GM12878 (cell line): ENCODE measurements at regions of chr3 and their contacts with region 1.

Region 1: DNA sequence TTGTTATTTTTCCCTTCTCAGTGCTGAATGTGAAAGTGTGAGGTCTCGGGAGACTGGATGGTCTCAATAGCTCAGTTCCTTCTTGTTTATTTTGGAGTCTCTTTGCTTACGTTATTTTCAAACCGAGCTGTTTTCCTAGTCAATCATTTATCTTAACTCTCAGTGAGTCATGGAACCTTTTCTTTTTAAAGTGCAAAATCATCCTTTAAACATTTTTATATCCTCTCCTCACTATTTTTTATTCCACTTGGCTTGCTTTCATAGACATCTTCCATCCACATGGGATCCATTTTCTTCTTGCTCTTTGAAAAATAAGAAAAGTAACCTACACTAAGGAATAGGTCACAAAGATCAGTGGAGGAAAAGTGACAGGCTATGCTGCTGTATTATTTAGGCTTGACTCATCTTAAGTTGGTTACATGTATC is 497.8 kb downstream of the NAALADL2 start:
- DNase-seq: no peak
- ATAC-seq: peak; percentile 64
- H3K4me3 ChIP-seq: no peak overlapping the region
- H3K27ac ChIP-seq: no peak overlapping the region
- H3K4me1 ChIP-seq: no peaks in the 10 kb centered on the region
- H3K27me3 ChIP-seq: no peaks in the 10 kb centered on the region
- CTCF ChIP-seq: no peak
- EP300 ChIP-seq: peak; percentile 41 to 79; a peak in 3 of 4 replicates
- POLR2A ChIP-seq: no peak
- RAD21 ChIP-seq: no peak

Region 2: GRCh38 chr3:174700736-174701135 is 656.2 kb before region 1 on chr3:
- CTCF ChIA-PET with region 1: no interaction called
- POLR2A ChIA-PET with region 1: no interaction called
- RAD21 ChIA-PET with region 1: no interaction called
- SMC1A ChIA-PET with region 1: no interaction called
- in situ Hi-C with region 1: no loop called
- intact Hi-C with region 1: no loop called
- DNase-seq: no peak
- ATAC-seq: no peak
- H3K4me3 ChIP-seq: no peak overlapping the region
- H3K27ac ChIP-seq: no peak overlapping the region
- H3K4me1 ChIP-seq: no peaks in the 10 kb centered on the region
- H3K27me3 ChIP-seq: no peaks in the 10 kb centered on the region
- CTCF ChIP-seq: no peak
- EP300 ChIP-seq: no peak
- POLR2A ChIP-seq: no peak
- RAD21 ChIP-seq: no peak

Region 3: GRCh38 chr3:175287361-175287963 is 69.5 kb before region 1 on chr3:
- CTCF ChIA-PET with region 1: interaction called, 3 read pairs
- POLR2A ChIA-PET with region 1: interaction called, 3 read pairs
- RAD21 ChIA-PET with region 1: interaction called, 23 read pairs
- SMC1A ChIA-PET with region 1: interaction called, 15 read pairs
- in situ Hi-C with region 1: no loop called
- intact Hi-C with region 1: no loop called
- DNase-seq: peak; percentile 54
- ATAC-seq: peak; percentile 100
- H3K4me3 ChIP-seq: no peak overlapping the region
- H3K27ac ChIP-seq: no peak overlapping the region
- H3K4me1 ChIP-seq: no peaks in the 10 kb centered on the region
- H3K27me3 ChIP-seq: no peaks in the 10 kb centered on the region
- CTCF ChIP-seq: no peak
- EP300 ChIP-seq: peak in 1 of 2 experiments; percentile 32; a peak in 1 of 4 replicates
- POLR2A ChIP-seq: no peak
- RAD21 ChIP-seq: no peak

Region 4: DNA sequence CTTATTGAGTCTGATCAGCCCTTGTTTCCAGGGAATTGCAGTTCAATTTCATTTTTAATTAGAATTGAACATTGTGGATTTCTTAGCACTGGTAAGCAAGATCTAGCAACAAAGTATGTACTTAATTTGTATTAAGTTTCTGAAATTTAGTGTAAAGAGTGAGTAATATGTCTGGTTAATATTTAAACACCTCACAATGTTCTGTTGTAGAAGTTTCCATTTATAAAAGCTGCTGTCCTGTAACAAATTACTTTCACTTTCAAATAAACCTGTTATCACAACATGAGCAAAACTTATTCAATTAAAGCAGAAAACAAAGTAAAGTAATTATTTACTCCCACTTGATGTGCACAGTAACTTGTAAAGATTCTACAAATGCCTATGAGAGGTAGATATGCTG is 49.3 kb before region 1 on chr3:
- CTCF ChIA-PET with region 1: interaction called, 3 read pairs
- POLR2A ChIA-PET with region 1: interaction called, 3 read pairs
- RAD21 ChIA-PET with region 1: interaction called, 30 read pairs
- SMC1A ChIA-PET with region 1: interaction called, 18 read pairs
- in situ Hi-C with region 1: no loop called
- intact Hi-C with region 1: no loop called
- DNase-seq: no peak
- ATAC-seq: peak; percentile 88
- H3K4me3 ChIP-seq: no peak overlapping the region
- H3K27ac ChIP-seq: no peak overlapping the region
- H3K4me1 ChIP-seq: no peaks in the 10 kb centered on the region
- H3K27me3 ChIP-seq: no peaks in the 10 kb centered on the region
- CTCF ChIP-seq: no peak
- EP300 ChIP-seq: 0 out of 4 replicates have a peak, but pooled peaks of 1 of the 2 experiments have one; percentile 32
- POLR2A ChIP-seq: no peak
- RAD21 ChIP-seq: no peak

Region 5: GRCh38 chr3:175371818-175372210 is 14.9 kb after region 1 on chr3:
- CTCF ChIA-PET with region 1: interaction called, 10 read pairs
- POLR2A ChIA-PET with region 1: interaction called, 8 read pairs
- RAD21 ChIA-PET with region 1: interaction called, 13 read pairs
- SMC1A ChIA-PET with region 1: interaction called, 5 read pairs
- in situ Hi-C with region 1: no loop called
- intact Hi-C with region 1: no loop called
- DNase-seq: no peak
- ATAC-seq: no peak
- H3K4me3 ChIP-seq: no peak overlapping the region
- H3K27ac ChIP-seq: no peak overlapping the region
- H3K4me1 ChIP-seq: no peaks in the 10 kb centered on the region
- H3K27me3 ChIP-seq: no peaks in the 10 kb centered on the region
- CTCF ChIP-seq: no peak
- EP300 ChIP-seq: no peak
- POLR2A ChIP-seq: no peak
- RAD21 ChIP-seq: no peak

Region 6: DNA sequence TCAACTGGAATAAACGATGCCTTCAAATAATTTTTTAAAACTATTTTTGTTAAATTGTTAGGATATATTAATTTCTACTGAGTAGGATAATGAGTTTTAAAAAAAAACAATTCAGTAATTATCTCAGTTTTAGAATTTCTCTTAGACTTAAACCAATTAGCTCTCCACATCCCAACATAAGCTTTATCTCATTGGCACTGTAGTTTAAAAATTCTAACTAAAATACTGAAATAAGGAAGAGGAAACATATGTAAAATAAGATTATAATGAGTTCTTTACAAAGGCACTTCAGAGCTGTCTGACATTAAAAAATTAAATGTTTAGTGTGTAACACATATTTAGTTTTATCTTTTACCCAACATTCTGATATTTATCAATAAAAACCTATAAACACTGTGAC is 60.5 kb after region 1 on chr3:
- CTCF ChIA-PET with region 1: interaction called, 5 read pairs
- POLR2A ChIA-PET with region 1: no interaction called
- RAD21 ChIA-PET with region 1: interaction called, 10 read pairs
- SMC1A ChIA-PET with region 1: interaction called, 18 read pairs
- in situ Hi-C with region 1: no loop called
- intact Hi-C with region 1: no loop called
- DNase-seq: no peak
- ATAC-seq: no peak
- H3K4me3 ChIP-seq: no peak overlapping the region
- H3K27ac ChIP-seq: no peak overlapping the region
- H3K4me1 ChIP-seq: no peaks in the 10 kb centered on the region
- H3K27me3 ChIP-seq: no peaks in the 10 kb centered on the region
- CTCF ChIP-seq: no peak
- EP300 ChIP-seq: no peak
- POLR2A ChIP-seq: no peak
- RAD21 ChIP-seq: no peak

Region 7: DNA sequence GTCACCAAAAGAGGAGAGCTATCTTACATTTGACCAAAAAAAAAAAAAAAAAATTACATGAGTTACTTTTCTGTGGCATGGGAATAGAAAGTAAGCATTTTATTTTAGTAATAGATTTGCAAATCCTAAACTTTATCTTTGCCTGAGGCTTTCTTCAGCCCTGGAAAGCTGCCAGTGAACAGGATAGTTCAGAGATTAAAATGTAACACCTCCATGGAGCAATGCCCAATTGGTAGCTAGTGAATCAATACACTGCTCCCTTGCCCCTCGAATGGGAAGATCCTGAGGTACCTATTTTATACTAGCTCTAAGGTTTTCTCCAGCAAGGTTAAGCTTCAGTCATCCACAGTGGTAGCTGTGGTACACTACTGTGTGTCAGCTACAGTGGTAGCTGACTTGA is 369.3 kb after region 1 on chr3:
- CTCF ChIA-PET with region 1: no interaction called
- POLR2A ChIA-PET with region 1: no interaction called
- RAD21 ChIA-PET with region 1: no interaction called
- SMC1A ChIA-PET with region 1: no interaction called
- in situ Hi-C with region 1: no loop called
- intact Hi-C with region 1: no loop called
- DNase-seq: no peak
- ATAC-seq: no peak
- H3K4me3 ChIP-seq: no peak overlapping the region
- H3K27ac ChIP-seq: no peak overlapping the region
- H3K4me1 ChIP-seq: no peaks in the 10 kb centered on the region
- H3K27me3 ChIP-seq: no peaks in the 10 kb centered on the region
- CTCF ChIP-seq: no peak
- EP300 ChIP-seq: no peak
- POLR2A ChIP-seq: no peak
- RAD21 ChIP-seq: no peak

Region 8: DNA sequence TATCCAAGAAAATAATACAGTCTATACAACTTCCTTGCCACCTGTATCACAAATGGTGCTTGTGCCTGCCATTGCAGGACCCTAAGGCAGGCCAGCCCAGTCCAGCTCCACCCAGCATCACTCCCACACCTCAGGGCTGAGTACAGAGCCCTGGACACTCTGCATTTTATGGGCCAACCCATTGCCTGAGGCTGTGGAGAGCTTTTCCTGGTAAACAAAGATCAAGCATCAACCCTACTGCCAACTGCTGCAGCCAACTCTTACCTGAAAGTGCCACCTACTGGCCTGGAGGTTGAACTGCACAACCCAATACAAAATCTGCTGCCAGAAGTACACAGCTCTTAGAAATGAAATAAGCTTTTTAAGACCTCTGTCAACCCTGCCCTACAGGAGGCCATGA is 584.4 kb after region 1 on chr3:
- CTCF ChIA-PET with region 1: interaction called, 11 read pairs
- POLR2A ChIA-PET with region 1: no interaction called
- RAD21 ChIA-PET with region 1: interaction called, 12 read pairs
- SMC1A ChIA-PET with region 1: interaction called, 7 read pairs
- in situ Hi-C with region 1: no loop called
- intact Hi-C with region 1: no loop called
- DNase-seq: no peak
- ATAC-seq: peak; percentile 92
- H3K4me3 ChIP-seq: no peak overlapping the region
- H3K27ac ChIP-seq: no peak overlapping the region
- H3K4me1 ChIP-seq: no peaks in the 10 kb centered on the region
- H3K27me3 ChIP-seq: no peaks in the 10 kb centered on the region
- CTCF ChIP-seq: peak; percentile 46 to 70 (median 60)
- EP300 ChIP-seq: no peak
- POLR2A ChIP-seq: no peak
- RAD21 ChIP-seq: peak; percentile 74